K562 (cell line): ENCODE measurements at regions of chr5 and their contacts with region 1.

Region 1: GRCh38 chr5:135398160-135398852 is 725 bp downstream of the MACROH2A1 start:
- DNase-seq: peak; percentile 58 to 59 (median 58)
- ATAC-seq: peak; percentile 60
- H3K4me3 ChIP-seq: peak overlapping the region; percentile 88
- H3K27ac ChIP-seq: peak overlapping the region; percentile 89
- H3K4me1 ChIP-seq: peaks cover 30 to 52% of the 10 kb centered on the region in 2 experiments
- H3K27me3 ChIP-seq: no peaks in the 10 kb centered on the region
- CTCF ChIP-seq: no peak
- EP300 ChIP-seq: no peak
- POLR2A ChIP-seq: no peak
- RAD21 ChIP-seq: no peak

Region 2: DNA sequence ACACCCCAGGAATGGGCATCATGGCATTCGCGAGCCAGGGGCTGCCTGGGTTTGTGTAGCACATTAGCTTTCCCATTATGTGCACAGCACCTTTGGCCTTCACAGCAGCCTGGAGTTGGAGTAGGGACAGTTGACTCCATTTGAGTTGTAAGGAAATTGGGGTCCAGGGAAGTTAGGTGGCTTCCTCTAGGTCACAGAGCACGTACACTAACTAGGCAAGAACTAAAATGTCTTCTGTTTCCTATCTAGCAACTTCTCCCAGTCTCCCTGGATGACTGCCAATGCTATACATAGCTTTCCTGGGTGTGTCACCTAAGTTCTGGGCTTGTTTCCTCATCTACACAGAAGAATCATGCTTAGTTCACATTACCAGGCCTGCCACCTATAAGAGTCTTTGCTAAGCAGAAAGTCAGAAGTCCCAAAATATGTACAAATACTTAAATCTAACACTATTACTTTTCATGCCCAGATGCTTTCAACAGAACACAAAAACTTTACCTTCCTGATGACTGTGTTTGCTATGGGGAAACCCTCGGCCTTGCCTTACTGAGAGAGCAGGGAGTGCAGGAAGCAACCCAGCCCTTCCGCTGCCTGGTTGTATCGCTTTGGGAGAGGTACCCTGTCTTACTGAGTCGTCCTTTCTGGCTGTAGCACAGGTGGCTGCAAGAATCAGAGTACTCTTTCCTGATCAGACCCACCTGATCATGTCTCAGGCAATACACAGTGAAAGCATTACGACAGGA is 11.2 kb before region 1 on chr5:
- CTCF ChIA-PET with region 1: no interaction called
- POLR2A ChIA-PET with region 1: interaction called, 28 read pairs
- in situ Hi-C with region 1: no loop called
- intact Hi-C with region 1: no loop called
- DNase-seq: peak; percentile 35 to 92 (median 63)
- ATAC-seq: peak; percentile 84
- H3K4me3 ChIP-seq: no peak overlapping the region
- H3K27ac ChIP-seq: peak overlapping the region; percentile 71
- H3K4me1 ChIP-seq: peaks cover 25 to 42% of the 10 kb centered on the region in 2 experiments; a peak in 4 of 5 replicates
- H3K27me3 ChIP-seq: no peaks in the 10 kb centered on the region
- CTCF ChIP-seq: no peak
- EP300 ChIP-seq: no peak
- POLR2A ChIP-seq: no peak
- RAD21 ChIP-seq: no peak